ENCODE measurements at regions of chr10 and their contacts with region 1.

Region 1: GRCh38 chr10:123132576-123133477 is 2.9 kb upstream of the HMX3 start:
- DNase-seq: peak; percentile 77 to 91 (median 82)
- ATAC-seq: peak; percentile 67
- H3K4me3 ChIP-seq: peak overlapping the region; percentile 10
- H3K4me3 Mint-ChIP-seq: peak overlapping the region; percentile 83
- H3K27ac ChIP-seq: no peak overlapping the region
- H3K27ac Mint-ChIP-seq: no peak overlapping the region
- H3K4me1 ChIP-seq: peaks cover 49% of the 10 kb centered on the region
- H3K4me1 Mint-ChIP-seq: peaks cover 29% of the 10 kb centered on the region
- H3K27me3 ChIP-seq: peaks cover 59 to 74% of the 10 kb centered on the region in 2 experiments
- H3K27me3 Mint-ChIP-seq: peaks cover 90% of the 10 kb centered on the region
- CTCF ChIP-seq: peak; percentile 87

Region 2: GRCh38 chr10:123043409-123043925 is 89.4 kb before region 1 on chr10:
- CTCF ChIA-PET with region 1: interaction called, 3 read pairs
- POLR2A ChIA-PET with region 1: no interaction called
- intact Hi-C with region 1: loop called (anchors 2 to 5 kb)
- DNase-seq: peak; percentile 12 to 72 (median 30)
- ATAC-seq: peak; percentile 69
- H3K4me3 ChIP-seq: no peak overlapping the region
- H3K4me3 Mint-ChIP-seq: no peak overlapping the region
- H3K27ac ChIP-seq: no peak overlapping the region
- H3K27ac Mint-ChIP-seq: no peak overlapping the region
- H3K4me1 ChIP-seq: peaks cover 2% of the 10 kb centered on the region
- H3K4me1 Mint-ChIP-seq: peaks cover 8% of the 10 kb centered on the region
- H3K27me3 ChIP-seq: no peaks in the 10 kb centered on the region
- H3K27me3 Mint-ChIP-seq: no peaks in the 10 kb centered on the region
- CTCF ChIP-seq: peak; percentile 69

Region 3: GRCh38 chr10:123380497-123381085 is 247.8 kb after region 1 on chr10:
- CTCF ChIA-PET with region 1: interaction called, 7 read pairs
- POLR2A ChIA-PET with region 1: interaction called, 3 read pairs
- intact Hi-C with region 1: loop called (anchors 1 kb)
- DNase-seq: peak in 3 of 14 experiments; percentile 14 to 24 (median 22)
- ATAC-seq: no peak
- H3K4me3 ChIP-seq: no peak overlapping the region
- H3K4me3 Mint-ChIP-seq: no peak overlapping the region
- H3K27ac ChIP-seq: no peak overlapping the region
- H3K27ac Mint-ChIP-seq: no peak overlapping the region
- H3K4me1 ChIP-seq: no peaks in the 10 kb centered on the region
- H3K4me1 Mint-ChIP-seq: no peaks in the 10 kb centered on the region
- H3K27me3 ChIP-seq: no peaks in the 10 kb centered on the region
- H3K27me3 Mint-ChIP-seq: peaks cover 20% of the 10 kb centered on the region
- CTCF ChIP-seq: peak; percentile 23

Region 4: DNA sequence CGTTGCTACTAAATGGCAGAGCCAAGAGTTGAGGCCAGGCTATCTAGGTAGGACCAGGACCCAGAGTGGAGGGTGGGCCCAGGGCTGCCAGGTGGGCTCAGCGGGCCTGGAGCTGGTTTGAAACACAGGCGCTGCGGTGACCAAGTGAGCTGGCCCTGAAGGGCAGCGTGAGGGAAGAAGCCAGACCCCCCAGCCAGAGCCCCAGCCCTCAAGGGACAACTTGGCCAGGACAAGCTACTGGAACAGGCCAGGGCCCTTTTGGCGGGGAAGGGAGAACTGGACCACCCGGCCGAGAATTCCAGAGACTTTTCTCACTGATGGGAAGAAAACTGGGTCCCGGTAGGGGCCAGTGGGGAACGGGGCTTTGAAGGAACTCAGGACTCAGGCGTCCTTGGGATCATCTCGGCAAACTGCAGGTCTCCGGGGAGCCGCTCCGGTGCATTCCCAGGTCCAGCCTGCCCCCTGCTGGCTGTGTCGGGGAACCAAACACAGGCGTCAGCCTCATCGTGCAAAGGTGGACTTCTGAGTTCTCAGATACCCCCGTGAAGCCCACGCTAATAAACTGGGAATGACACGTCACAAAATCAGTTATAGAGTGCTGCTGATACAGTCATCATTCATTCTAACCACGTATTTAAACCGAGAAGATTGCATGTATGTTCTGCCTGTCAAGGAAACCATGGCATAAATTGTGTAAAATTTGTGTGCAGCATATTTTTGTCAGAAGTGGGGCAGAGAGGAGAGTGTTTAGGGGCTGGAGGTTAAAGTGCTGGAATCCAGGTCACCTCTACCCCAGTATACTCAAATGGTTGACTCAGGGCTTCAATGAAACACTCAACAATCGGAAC is 834.8 kb after region 1 on chr10:
- CTCF ChIA-PET with region 1: no interaction called
- POLR2A ChIA-PET with region 1: no interaction called
- intact Hi-C with region 1: loop called in 1 of 2 experiments (anchors 5 kb)
- DNase-seq: peak in 6 of 14 experiments; percentile 10 to 55 (median 36)
- ATAC-seq: no peak
- H3K4me3 ChIP-seq: no peak overlapping the region
- H3K4me3 Mint-ChIP-seq: no peak overlapping the region
- H3K27ac ChIP-seq: no peak overlapping the region
- H3K27ac Mint-ChIP-seq: no peak overlapping the region
- H3K4me1 ChIP-seq: peaks cover 4% of the 10 kb centered on the region
- H3K4me1 Mint-ChIP-seq: no peaks in the 10 kb centered on the region
- H3K27me3 ChIP-seq: peaks cover 31 to 55% of the 10 kb centered on the region in 2 experiments
- H3K27me3 Mint-ChIP-seq: peaks cover 77% of the 10 kb centered on the region
- CTCF ChIP-seq: peak; percentile 26

Measured in CD4-positive, alpha-beta T cell (primary cell).